AG04449 (cell line): ENCODE measurements at regions of chr13 and their contacts with region 1.

Region 1: GRCh38 chr13:49436890-49437289 is 7.0 kb downstream of the CAB39L start:
- DNase-seq: no peak
- H3K4me3 ChIP-seq: no peak overlapping the region
- CTCF ChIP-seq: no peak

Region 2: GRCh38 chr13:49240017-49240416 is 196.9 kb before region 1 on chr13:
- CTCF ChIA-PET with region 1: interaction called, 19 read pairs
- POLR2A ChIA-PET with region 1: no interaction called
- DNase-seq: no peak
- H3K4me3 ChIP-seq: no peak overlapping the region
- CTCF ChIP-seq: peak; percentile 50

Region 3: GRCh38 chr13:49292742-49293486 is 144.0 kb before region 1 on chr13:
- CTCF ChIA-PET with region 1: interaction called, 115 read pairs
- POLR2A ChIA-PET with region 1: no interaction called
- DNase-seq: no peak
- H3K4me3 ChIP-seq: no peak overlapping the region
- CTCF ChIP-seq: no peak

Region 4: DNA sequence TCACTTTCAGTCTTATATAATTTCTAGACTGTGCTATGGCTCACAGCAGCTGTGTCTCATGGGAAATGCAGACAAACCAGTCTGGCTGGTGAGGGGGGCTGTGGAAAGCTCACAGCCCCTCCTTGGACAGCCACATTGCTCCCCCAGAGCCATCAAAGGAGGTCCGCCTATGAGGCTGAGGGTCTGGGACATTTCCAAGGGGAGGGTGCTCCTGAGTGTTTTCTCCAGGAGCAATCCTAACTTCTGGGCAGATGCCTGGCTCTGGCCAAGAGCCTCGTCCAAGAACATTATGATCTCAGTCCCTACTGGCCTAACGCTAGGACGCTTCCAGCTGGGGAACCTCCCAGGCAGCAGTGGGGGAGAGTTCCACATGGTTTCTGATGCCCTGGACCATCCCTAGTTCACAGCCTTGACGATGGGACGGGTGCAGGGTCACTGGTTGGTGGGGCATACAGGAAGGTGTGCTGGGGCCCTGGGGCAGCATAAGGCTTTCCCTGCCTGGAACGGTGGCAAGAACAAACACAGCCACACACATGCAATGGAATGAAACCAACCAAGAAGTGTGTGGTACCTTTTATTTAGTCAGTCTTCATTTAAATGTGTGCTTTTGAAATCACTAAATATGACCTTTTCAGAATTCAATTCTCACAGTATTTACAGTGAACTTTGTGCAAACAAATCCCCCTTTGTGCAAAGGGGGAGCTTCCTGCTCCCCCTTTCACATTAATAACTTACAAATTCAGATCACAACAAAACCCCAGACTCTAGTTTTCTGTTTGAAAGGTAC is 128.6 kb before region 1 on chr13:
- CTCF ChIA-PET with region 1: interaction called, 115 read pairs
- POLR2A ChIA-PET with region 1: no interaction called
- DNase-seq: no peak
- H3K4me3 ChIP-seq: no peak overlapping the region
- CTCF ChIP-seq: no peak

Region 5: DNA sequence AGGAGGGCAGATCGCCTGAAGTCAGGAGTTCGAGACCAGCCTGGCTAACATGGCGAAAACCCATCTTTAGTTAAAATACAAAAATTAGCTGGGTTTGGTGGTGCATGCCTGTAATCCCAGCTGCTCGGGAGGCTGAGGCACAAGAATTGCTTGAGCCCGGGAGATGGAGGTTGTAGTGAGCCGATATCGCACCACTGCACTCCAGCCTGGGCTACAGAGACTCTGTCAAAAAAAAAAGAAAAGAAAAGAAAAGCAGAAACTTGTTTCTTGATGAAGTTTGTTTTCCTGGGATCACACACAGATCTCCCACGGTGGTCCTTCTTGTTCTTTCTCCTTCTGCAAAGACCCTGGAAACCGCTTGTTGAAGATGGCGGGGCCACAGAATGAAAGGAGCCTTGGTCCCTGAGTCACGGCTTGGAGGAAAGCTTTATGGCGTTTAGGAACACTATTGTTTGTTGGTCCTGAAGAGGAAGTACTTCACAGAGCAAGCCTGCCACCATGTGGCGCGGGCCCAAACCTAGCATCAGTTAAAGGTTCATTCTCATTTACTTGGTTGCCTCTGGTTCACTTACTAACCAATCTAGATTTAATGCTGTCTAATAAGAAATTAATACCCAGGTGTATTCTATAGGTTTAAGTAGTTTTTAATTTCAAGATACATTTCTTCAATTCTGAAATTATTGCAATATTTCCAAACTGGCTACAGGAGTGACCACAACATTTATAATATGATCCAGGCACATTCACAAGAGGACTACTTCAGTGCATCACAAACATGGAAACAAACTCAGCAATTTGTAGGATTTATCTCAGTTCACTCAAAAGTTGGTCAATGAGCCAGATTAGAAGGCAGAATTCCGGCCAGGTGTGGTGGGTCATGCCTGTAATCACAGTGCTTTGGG is 170.1 kb after region 1 on chr13:
- CTCF ChIA-PET with region 1: interaction called, 20 read pairs
- POLR2A ChIA-PET with region 1: no interaction called
- DNase-seq: peak; percentile 44
- H3K4me3 ChIP-seq: peak overlapping the region; percentile 12; the same call in 1 of the 2 replicates
- CTCF ChIP-seq: peak; percentile 81